ENCODE measurements at regions of chr19 and their contacts with region 1.

Region 1: DNA sequence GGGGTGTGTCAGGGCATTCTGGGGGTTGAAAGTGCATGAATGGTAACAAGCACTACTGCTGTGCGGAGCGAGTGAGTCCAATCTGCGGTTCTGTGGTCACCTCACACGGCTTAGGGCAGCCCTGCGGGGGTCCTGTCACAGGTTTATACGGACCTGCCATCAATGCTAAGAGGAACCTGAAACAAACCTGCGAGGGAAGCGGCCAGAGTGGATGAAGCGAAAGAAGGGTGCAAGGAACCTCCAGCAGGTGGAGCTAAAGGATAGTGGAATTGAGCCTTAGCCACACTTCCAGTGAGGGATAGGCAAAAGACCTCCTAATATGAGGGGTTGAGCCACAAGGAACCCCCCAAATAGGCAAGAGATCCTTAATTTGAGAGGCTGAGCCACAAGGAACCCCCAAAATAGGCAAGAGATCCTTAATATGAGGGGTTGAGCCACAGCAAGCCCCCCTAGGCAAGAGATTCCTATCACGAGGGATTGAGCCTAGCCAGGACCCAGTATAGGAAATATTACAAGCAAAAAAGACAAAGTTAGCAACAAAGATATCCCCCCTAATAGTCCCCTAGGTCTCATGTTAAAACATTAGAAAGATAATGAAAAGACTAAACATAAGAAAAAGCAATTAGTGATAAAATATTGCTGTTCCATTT is 6.3 kb upstream of the ZNF69 start:
- DNase-seq: peak; percentile 33 to 79 (median 66)
- ATAC-seq: peak; percentile 62
- H3K4me3 ChIP-seq: peak overlapping the region in 1 of 2 experiments; percentile 33
- H3K4me3 Mint-ChIP-seq: no peak overlapping the region
- H3K27ac ChIP-seq: no peak overlapping the region
- H3K27ac Mint-ChIP-seq: no peak overlapping the region
- H3K4me1 ChIP-seq: peaks cover 3% of the 10 kb centered on the region
- H3K4me1 Mint-ChIP-seq: peaks cover 2% of the 10 kb centered on the region
- H3K27me3 ChIP-seq: no peaks in the 10 kb centered on the region
- H3K27me3 Mint-ChIP-seq: no peaks in the 10 kb centered on the region
- CTCF ChIP-seq: peak; percentile 53

Region 2: GRCh38 chr19:11694533-11695439 is 186.5 kb before region 1 on chr19:
- CTCF ChIA-PET with region 1: no interaction called
- POLR2A ChIA-PET with region 1: no interaction called
- intact Hi-C with region 1: no loop called
- DNase-seq: peak; percentile 59 to 84 (median 74)
- ATAC-seq: peak; percentile 99
- H3K4me3 ChIP-seq: peak overlapping the region; percentile 55 to 71
- H3K4me3 Mint-ChIP-seq: peak overlapping the region; percentile 94
- H3K27ac ChIP-seq: no peak overlapping the region
- H3K27ac Mint-ChIP-seq: no peak overlapping the region
- H3K4me1 ChIP-seq: peaks cover 17% of the 10 kb centered on the region
- H3K4me1 Mint-ChIP-seq: peaks cover 13% of the 10 kb centered on the region
- H3K27me3 ChIP-seq: peaks cover 9 to 12% of the 10 kb centered on the region in 2 experiments
- H3K27me3 Mint-ChIP-seq: peaks cover 37% of the 10 kb centered on the region
- CTCF ChIP-seq: no peak

Region 3: DNA sequence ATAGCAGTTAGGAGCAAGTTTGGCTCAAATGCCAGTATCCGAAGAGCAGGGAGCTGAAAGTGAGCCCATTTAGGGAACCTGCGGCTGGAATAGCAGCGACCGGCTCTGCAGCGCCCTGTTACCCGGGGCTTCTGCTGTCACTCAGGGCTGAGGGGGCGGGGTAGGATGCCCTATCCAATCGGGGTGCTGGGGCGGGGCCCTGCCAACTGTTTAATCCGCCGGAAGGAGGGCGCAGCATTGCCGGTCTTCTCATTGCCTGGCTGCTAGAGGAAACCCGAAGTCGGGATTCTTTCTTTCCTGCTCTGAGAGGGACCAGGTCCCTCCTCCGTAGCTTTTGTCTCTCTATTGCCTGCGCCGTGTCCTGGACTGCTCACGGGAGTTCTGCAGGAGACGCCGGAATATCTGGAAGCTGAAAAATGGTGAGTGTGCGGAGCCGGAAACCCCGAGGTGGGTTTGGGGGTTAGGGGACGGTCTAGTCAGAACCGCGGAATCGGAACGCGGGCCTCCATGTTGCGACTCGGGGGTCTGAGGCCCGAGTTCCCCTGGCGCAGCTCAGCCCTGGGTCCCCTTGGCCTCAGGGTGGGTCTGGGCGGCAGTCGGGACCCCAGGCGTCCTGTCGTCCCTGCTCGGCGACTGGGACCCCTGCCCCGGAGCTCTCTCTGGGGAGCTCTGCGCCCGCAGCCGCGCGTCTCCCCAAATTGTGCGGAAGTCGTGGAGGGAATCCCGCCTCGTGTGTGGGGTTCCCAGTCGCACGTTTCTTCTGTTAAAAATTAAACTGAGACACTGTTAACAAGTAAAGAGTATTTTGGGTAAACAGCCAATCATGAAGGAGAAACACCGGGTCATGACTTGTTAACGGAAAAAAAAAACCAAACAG is 106.4 kb after region 1 on chr19:
- CTCF ChIA-PET with region 1: interaction called, 71 read pairs
- POLR2A ChIA-PET with region 1: no interaction called
- intact Hi-C with region 1: loop called (anchors 1 kb)
- DNase-seq: peak; percentile 82 to 94 (median 91)
- ATAC-seq: peak; percentile 92
- H3K4me3 ChIP-seq: peak overlapping the region; percentile 89 to 98
- H3K4me3 Mint-ChIP-seq: peak overlapping the region; percentile 99
- H3K27ac ChIP-seq: peak overlapping the region; percentile 79 to 83
- H3K27ac Mint-ChIP-seq: peak overlapping the region; percentile 91
- H3K4me1 ChIP-seq: peaks cover 10% of the 10 kb centered on the region
- H3K4me1 Mint-ChIP-seq: peaks cover 26% of the 10 kb centered on the region
- H3K27me3 ChIP-seq: no peaks in the 10 kb centered on the region
- H3K27me3 Mint-ChIP-seq: no peaks in the 10 kb centered on the region
- CTCF ChIP-seq: no peak

Measured in CD8-positive, alpha-beta T cell (primary cell).